ENCODE measurements at regions of chr15 and their contacts with region 1.

Region 1: DNA sequence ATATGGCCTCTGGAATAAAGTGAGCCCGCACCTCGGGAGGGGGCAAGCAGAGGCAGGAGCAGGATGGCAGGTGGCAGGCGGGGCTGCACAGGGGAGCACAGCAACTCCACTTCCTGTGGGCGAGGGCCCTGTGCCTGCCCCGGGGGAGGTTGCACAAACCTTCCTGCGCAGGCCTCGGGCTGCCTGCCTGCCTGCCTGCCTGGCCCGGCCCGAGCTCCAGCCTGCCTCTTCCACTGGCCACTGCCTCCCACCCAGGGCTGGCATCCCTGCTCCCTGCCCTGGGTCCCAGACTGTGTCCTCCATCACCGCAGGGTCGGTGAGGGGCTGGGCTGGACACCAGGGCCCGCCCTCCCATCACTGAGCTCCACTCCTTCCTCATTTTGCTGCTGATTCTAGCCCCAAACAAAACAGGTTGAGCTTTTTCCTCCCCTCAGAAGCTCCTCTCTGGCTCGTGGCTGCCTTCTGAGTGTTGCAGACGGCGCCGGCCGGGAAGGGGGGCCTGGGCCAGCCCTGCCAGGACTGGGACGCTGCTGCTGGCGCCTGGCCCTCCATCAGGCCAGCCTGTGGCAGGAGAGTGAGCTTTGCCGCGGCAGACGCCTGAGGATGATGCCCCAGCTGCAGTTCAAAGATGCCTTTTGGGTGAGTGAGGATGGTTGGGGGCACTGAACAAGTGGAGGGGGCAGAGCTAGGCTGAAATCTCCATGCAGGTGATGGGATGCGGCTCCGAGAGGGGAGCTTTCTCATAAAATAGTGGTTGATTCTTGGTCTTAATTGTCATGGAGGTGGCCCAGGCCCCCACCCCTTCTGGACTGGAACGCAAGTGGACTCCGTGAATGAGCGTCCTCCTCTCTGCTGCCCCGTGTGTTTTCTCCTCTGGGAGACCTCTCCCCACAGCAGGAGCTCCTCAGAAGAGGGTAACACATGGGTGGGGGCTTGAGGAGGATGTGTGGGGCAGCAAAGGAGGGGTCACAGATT is at the start of gene PSTPIP1:
- DNase-seq: peak; percentile 47 to 81 (median 68)
- ATAC-seq: peak; percentile 80 to 83 (median 82)
- H3K4me3 ChIP-seq: peak within 1 kb of the TSS; percentile 71 to 77
- H3K4me3 Mint-ChIP-seq: peak within 1 kb of the TSS; percentile 91 to 96 (median 93)
- H3K27ac ChIP-seq: peak within 1 kb of the TSS; percentile 88
- H3K27ac Mint-ChIP-seq: peak within 1 kb of the TSS; percentile 98 to 99
- H3K4me1 ChIP-seq: peaks cover 35 to 73% of the 10 kb centered on the region in 2 experiments
- H3K4me1 Mint-ChIP-seq: peaks cover 59 to 74% (median 60%) of the 10 kb centered on the region in 3 donors
- H3K27me3 ChIP-seq: no peaks in the 10 kb centered on the region
- H3K27me3 Mint-ChIP-seq: no peaks in the 10 kb centered on the region
- total RNA-seq, gene PSTPIP1: 110 to 231 (median 180) TPM

Region 2: GRCh38 chr15:76912141-76912834 is 83.0 kb before region 1 on chr15:
- CTCF ChIA-PET with region 1: no interaction called
- POLR2A ChIA-PET with region 1: no interaction called
- DNase-seq: no peak
- ATAC-seq: no peak
- H3K4me3 ChIP-seq: no peak overlapping the region
- H3K4me3 Mint-ChIP-seq: no peak overlapping the region
- H3K27ac ChIP-seq: no peak overlapping the region
- H3K27ac Mint-ChIP-seq: no peak overlapping the region
- H3K4me1 ChIP-seq: no peaks in the 10 kb centered on the region
- H3K4me1 Mint-ChIP-seq: peaks cover 0 to 3% (median 0%) of the 10 kb centered on the region in 3 donors
- H3K27me3 ChIP-seq: peaks cover 0 to 10% of the 10 kb centered on the region in 2 experiments
- H3K27me3 Mint-ChIP-seq: peaks cover 0 to 2% of the 10 kb centered on the region in 2 donors

Region 3: DNA sequence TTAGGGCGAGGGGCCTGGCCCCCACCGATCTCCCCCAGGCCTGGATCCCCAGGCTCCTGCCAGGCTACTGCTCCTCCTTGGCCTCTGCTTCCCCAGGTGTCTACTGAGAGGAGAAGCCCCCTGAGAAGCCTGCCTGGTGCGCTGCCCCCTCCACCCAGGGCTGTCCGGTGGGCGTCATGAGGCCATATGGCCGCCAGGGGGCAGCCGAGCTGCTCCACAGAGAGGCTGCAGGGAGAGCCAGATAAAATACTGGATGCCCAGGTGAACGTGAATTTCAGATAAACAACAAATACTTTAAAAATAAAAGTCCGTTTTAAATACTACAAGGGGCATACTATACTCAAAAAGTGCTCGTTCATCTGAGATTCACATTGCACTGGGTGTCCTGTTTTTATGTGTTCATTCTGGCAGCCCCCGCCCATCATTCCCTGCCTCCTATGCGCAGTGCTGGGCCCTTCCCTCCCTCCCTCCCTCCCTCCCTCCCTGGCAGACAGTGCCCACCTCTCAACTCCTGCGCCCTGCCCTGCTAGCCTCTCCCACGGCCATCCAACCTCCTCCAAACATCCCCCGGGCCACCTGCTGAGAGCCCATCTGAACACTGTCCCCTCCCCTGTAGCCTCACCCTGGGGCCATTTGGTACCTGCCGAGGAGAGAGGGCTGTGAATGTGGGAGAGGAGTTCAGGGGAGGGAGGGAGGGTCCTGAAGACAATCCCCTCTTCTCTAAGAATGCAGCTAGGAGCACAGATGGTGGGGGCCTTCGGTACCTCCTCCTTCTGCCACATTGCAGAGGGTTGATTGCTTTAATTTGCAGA is 29.2 kb after region 1 on chr15:
- CTCF ChIA-PET with region 1: interaction called, 3 to 12 read pairs
- POLR2A ChIA-PET with region 1: interaction called in 1 of 2 experiments, 5 read pairs
- DNase-seq: peak in 32 of 35 experiments; percentile 37 to 77 (median 54)
- ATAC-seq: peak; percentile 33 to 56 (median 46)
- H3K4me3 ChIP-seq: no peak overlapping the region
- H3K4me3 Mint-ChIP-seq: peak overlapping the region in 1 of 3 donors; percentile 19
- H3K27ac ChIP-seq: peak overlapping the region; percentile 76
- H3K27ac Mint-ChIP-seq: peak overlapping the region; percentile 71 to 91
- H3K4me1 ChIP-seq: peaks cover 30 to 62% of the 10 kb centered on the region in 2 experiments
- H3K4me1 Mint-ChIP-seq: peaks cover 46 to 55% (median 49%) of the 10 kb centered on the region in 3 donors
- H3K27me3 ChIP-seq: no peaks in the 10 kb centered on the region
- H3K27me3 Mint-ChIP-seq: no peaks in the 10 kb centered on the region

Region 4: DNA sequence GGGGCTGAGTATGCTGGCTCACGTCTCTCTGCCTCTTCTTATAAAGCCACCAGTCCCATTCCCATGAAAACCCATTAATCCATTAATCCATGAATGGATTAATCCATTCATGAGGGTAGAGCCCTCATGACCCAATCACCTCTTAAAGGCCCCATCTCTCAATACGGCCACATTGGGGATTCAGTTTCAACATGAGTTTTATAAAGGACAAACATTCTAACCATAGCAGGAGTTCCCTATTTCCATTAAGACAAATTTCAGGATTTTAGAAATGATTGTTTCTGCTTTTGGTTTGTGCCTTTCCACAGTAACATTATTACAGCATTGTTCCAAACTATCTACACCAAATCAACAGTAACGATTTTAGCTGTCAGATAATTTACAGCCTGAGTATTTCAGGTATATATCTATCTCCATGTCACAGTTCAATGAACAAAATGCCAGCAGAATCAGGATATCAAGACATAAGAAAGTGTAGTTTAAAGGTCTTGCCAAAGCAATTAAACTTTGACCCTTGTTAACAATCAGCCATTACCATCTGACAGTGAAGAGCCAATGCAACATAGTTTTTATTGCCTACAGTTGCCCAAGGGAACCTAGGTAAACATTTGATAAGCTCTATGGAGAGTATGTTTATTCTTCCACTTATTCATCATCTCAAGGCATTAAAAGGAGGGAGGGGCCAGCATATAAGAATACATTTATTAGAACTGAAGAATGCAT is 71.9 kb after region 1 on chr15:
- CTCF ChIA-PET with region 1: interaction called in 1 of 2 experiments, 3 read pairs
- POLR2A ChIA-PET with region 1: interaction called in 1 of 2 experiments, 11 read pairs
- DNase-seq: no peak
- ATAC-seq: no peak
- H3K4me3 ChIP-seq: no peak overlapping the region
- H3K4me3 Mint-ChIP-seq: no peak overlapping the region
- H3K27ac ChIP-seq: no peak overlapping the region
- H3K27ac Mint-ChIP-seq: no peak overlapping the region
- H3K4me1 ChIP-seq: peaks cover 9 to 16% of the 10 kb centered on the region in 2 experiments
- H3K4me1 Mint-ChIP-seq: peaks cover 33 to 47% (median 42%) of the 10 kb centered on the region in 3 donors
- H3K27me3 ChIP-seq: no peaks in the 10 kb centered on the region
- H3K27me3 Mint-ChIP-seq: no peaks in the 10 kb centered on the region